ENCODE measurements at regions of chr4 and their contacts with region 1.

Region 1: GRCh38 chr4:17810260-17811077 is at the starts of genes DCAF16 and NCAPG:
- DNase-seq: peak; percentile 95 to 100
- H3K4me3 ChIP-seq: peak within 1 kb of the TSS; percentile 72 to 83
- H3K27ac ChIP-seq: peak within 1 kb of the TSS; percentile 91 to 94
- H3K4me1 ChIP-seq: peaks cover 9 to 26% of the 10 kb centered on the region in 2 donors
- H3K27me3 ChIP-seq: no peaks in the 10 kb centered on the region
- CTCF ChIP-seq: no peak
- total RNA-seq, gene DCAF16: 7.9 TPM
- total RNA-seq, gene NCAPG: not detected

Region 2: GRCh38 chr4:16231570-16232232 is 1578.8 kb before region 1 on chr4:
- intact Hi-C with region 1: loop called (anchors 5 kb)
- DNase-seq: no peak
- H3K4me3 ChIP-seq: peak overlapping the region; percentile 17 to 25
- H3K27ac ChIP-seq: no peak overlapping the region
- H3K4me1 ChIP-seq: peaks cover 0 to 11% of the 10 kb centered on the region in 2 donors
- H3K27me3 ChIP-seq: no peaks in the 10 kb centered on the region
- CTCF ChIP-seq: no peak

Region 3: GRCh38 chr4:17576932-17577665 is 233.4 kb before region 1 on chr4 and contains the start of gene LAP3:
- intact Hi-C with region 1: loop called (anchors 1 kb)
- DNase-seq: peak; percentile 87 to 99
- H3K4me3 ChIP-seq: peak within 1 kb of the TSS; percentile 86 to 96
- H3K27ac ChIP-seq: peak within 1 kb of the TSS; percentile 96 to 97
- H3K4me1 ChIP-seq: peaks cover 7 to 17% of the 10 kb centered on the region in 2 donors
- H3K27me3 ChIP-seq: no peaks in the 10 kb centered on the region
- CTCF ChIP-seq: no peak
- total RNA-seq, gene LAP3: 60.3 TPM

Region 4: GRCh38 chr4:17614416-17615299 is 195.8 kb before region 1 on chr4 and contains the start of gene MED28:
- intact Hi-C with region 1: loop called (anchors 2 kb)
- DNase-seq: peak; percentile 88 to 98
- H3K4me3 ChIP-seq: peak within 1 kb of the TSS; percentile 80 to 91
- H3K27ac ChIP-seq: peak within 1 kb of the TSS; percentile 80 to 81
- H3K4me1 ChIP-seq: peaks cover 4 to 21% of the 10 kb centered on the region in 2 donors
- H3K27me3 ChIP-seq: no peaks in the 10 kb centered on the region
- CTCF ChIP-seq: peak in 1 of 3 experiments; percentile 21
- total RNA-seq, gene MED28: 6.2 TPM

Region 5: DNA sequence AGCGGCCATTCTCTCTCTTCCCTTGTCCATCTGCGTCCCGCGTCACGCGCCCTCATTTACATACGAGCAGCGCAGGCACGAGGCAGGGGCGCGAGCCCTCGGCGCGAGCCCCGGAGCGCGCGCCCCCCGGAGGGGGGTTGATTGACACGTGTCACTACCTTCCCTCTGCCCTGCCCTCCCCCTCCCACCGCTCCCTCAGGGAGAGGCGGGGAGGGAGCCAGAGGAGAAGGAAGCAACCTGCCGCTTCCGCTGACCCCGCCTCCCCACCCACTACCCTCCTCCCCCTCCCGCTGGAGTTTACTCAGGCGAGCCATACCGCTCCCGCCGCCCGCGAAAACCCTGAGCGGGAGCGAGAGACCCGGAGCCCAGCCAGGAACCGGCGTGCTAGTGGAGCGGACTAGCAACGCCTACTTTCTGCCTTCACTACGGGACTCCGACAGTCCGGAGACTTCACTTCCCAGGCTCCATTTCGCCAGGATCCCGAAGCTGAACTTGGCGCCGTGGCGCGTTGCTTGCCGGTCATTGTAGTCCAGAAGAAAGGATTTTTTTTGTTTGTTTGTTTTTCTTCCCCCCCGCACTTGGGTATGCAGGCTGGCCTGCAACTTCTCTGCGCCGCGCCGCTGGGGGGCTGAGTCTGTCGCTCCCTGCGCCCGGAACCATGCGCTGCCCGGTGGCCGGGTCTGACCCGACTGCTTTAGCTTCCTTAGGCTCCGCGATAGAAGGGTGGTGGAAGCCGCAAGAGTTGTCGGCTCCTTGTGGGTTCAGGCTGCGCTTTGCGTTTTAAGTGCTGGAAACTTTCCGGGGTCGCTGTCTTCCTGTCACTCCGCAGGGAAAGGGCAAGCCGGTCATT is 211.5 kb after region 1 on chr4 and contains the start of gene LCORL:
- intact Hi-C with region 1: loop called (anchors 1 kb)
- DNase-seq: peak; percentile 77 to 97
- H3K4me3 ChIP-seq: peak within 1 kb of the TSS; percentile 89 to 100
- H3K27ac ChIP-seq: peak within 1 kb of the TSS; percentile 83 to 91
- H3K4me1 ChIP-seq: peaks cover 2 to 3% of the 10 kb centered on the region in 2 donors
- H3K27me3 ChIP-seq: no peaks in the 10 kb centered on the region
- CTCF ChIP-seq: no peak
- total RNA-seq, gene LCORL: 1.4 TPM

Measured in ascending aorta (tissue), 2 donors.